ENCODE measurements at regions of chr2 and their contacts with region 1.

Region 1: GRCh38 chr2:99841749-99842148 is 300.6 kb downstream of the AFF3 start:
- DNase-seq: peak in 1 of 3 donors; percentile 48
- H3K4me3 ChIP-seq: no peak overlapping the region
- H3K27ac ChIP-seq: no peak overlapping the region
- H3K4me1 ChIP-seq: peaks cover 0 to 34% (median 19%) of the 10 kb centered on the region in 4 experiments
- H3K27me3 ChIP-seq: no peaks in the 10 kb centered on the region

Region 2: DNA sequence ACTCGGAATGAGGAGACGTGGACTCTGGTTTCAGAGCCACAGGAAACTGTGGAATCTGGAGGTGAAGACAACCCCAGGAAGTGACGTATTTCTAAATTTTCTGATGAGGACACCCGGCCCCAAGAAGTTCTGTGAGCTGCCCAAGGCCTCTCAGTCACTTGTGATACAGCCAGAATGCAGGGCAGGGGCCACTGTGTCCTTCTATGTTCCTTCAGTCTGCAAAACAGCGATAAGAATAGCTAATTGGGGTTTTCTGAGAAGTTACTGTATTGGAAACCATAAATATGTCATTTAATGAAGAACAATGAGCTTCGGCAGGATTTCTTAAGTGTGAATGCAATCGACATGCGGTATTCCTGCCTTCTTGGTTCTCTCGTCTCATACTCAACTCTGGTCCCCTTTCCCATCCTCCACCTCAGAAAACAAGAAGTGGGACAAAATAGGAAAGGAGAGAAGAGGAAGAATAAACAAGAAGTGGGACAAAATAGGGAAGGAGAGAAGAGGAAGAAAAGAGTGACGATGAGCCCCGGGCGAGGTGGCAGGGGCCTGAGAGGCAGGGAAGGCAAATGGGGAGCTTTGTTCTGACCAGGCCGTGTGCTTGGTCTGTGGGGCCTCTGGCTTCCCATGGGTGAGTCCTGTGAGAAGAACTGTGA is 69.9 kb before region 1 on chr2:
- CTCF ChIA-PET with region 1: no interaction called
- POLR2A ChIA-PET with region 1: no interaction called
- DNase-seq: peak; percentile 35 to 87 (median 70)
- H3K4me3 ChIP-seq: peak overlapping the region in 2 of 7 experiments; percentile 8 to 43
- H3K27ac ChIP-seq: peak overlapping the region; percentile 46 to 65
- H3K4me1 ChIP-seq: peaks cover 19 to 43% (median 37%) of the 10 kb centered on the region in 4 experiments
- H3K27me3 ChIP-seq: no peaks in the 10 kb centered on the region

Region 3: GRCh38 chr2:99818842-99819241 is 22.9 kb before region 1 on chr2:
- CTCF ChIA-PET with region 1: interaction called, 40 read pairs
- POLR2A ChIA-PET with region 1: no interaction called
- DNase-seq: peak; percentile 46 to 60 (median 56)
- H3K4me3 ChIP-seq: no peak overlapping the region
- H3K27ac ChIP-seq: no peak overlapping the region
- H3K4me1 ChIP-seq: peaks cover 0 to 3% (median 0%) of the 10 kb centered on the region in 4 experiments
- H3K27me3 ChIP-seq: no peaks in the 10 kb centered on the region

Region 4: GRCh38 chr2:99858951-99859596 is 17.3 kb after region 1 on chr2:
- CTCF ChIA-PET with region 1: interaction called, 10 read pairs
- POLR2A ChIA-PET with region 1: no interaction called
- DNase-seq: no peak
- H3K4me3 ChIP-seq: no peak overlapping the region
- H3K27ac ChIP-seq: no peak overlapping the region
- H3K4me1 ChIP-seq: peaks cover 23 to 57% (median 32%) of the 10 kb centered on the region in 4 experiments
- H3K27me3 ChIP-seq: no peaks in the 10 kb centered on the region

Measured in common myeloid progenitor, CD34-positive (primary cell).